ENCODE measurements at regions of chr9 and their contacts with region 1.

Region 1: DNA sequence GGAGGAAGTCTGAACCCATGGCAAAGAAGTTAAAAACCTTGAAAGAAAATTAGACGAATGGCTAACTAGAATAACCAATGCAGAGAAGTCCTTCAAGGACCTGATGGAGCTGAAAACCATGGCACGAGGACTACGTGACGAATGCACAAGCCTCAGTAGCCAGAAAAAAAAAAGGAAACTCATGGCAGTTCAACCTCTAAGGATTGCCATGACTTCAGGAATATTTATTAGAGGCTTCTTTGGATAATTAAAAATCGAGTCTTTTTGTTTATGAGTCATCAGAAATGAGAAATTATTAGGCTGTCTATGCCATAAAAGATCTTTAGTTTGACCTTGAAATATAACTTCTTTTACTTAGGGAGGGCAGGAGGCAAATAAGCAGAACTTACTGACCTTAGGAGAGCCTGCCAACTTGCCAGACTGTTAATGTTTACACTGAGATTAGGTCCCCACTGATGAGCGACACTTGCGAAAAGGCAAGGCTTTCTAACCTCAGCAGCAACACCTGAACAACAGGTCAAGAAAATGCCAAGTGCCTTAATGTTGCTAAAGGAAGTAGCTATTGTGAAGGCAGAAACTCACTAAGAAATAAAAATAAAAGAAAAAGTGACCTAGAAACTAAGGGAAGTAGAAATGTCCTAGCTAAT is 55.2 kb upstream of the TUSC1 start:
- DNase-seq: no peak
- ATAC-seq: no peak
- H3K4me3 ChIP-seq: no peak overlapping the region
- H3K4me3 Mint-ChIP-seq: no peak overlapping the region
- H3K27ac ChIP-seq: no peak overlapping the region
- H3K27ac Mint-ChIP-seq: no peak overlapping the region
- H3K4me1 ChIP-seq: no peaks in the 10 kb centered on the region
- H3K4me1 Mint-ChIP-seq: no peaks in the 10 kb centered on the region
- H3K27me3 ChIP-seq: no peaks in the 10 kb centered on the region
- H3K27me3 Mint-ChIP-seq: no peaks in the 10 kb centered on the region
- CTCF ChIP-seq: no peak

Region 2: DNA sequence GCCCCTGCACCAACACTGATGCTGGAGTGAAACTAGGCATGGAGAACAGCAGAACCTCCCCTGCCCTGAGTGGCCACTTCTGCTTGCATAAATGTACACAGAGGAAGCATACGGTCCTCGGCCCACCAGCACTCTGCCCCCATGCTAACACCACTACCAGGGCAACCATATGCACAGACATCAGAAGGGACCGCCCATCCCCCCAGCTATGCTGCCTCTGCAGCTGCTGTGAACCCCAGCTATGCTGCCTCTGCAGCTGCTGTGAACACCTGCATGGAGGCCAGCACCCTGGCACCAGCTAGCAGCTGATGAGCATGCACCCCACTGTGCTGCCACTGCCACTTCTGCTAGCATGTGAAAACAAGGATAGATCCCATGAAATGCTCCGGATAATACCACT is 305.6 kb before region 1 on chr9:
- CTCF ChIA-PET with region 1: no interaction called
- POLR2A ChIA-PET with region 1: no interaction called
- intact Hi-C with region 1: no loop called
- DNase-seq: no peak
- ATAC-seq: no peak
- H3K4me3 ChIP-seq: no peak overlapping the region
- H3K4me3 Mint-ChIP-seq: no peak overlapping the region
- H3K27ac ChIP-seq: no peak overlapping the region
- H3K27ac Mint-ChIP-seq: no peak overlapping the region
- H3K4me1 ChIP-seq: no peaks in the 10 kb centered on the region
- H3K4me1 Mint-ChIP-seq: no peaks in the 10 kb centered on the region
- H3K27me3 ChIP-seq: no peaks in the 10 kb centered on the region
- H3K27me3 Mint-ChIP-seq: no peaks in the 10 kb centered on the region
- CTCF ChIP-seq: no peak

Region 3: GRCh38 chr9:25709941-25710340 is 23.5 kb before region 1 on chr9:
- CTCF ChIA-PET with region 1: no interaction called
- POLR2A ChIA-PET with region 1: no interaction called
- intact Hi-C with region 1: loop called in 1 of 2 experiments (anchors 2 kb)
- DNase-seq: no peak
- ATAC-seq: no peak
- H3K4me3 ChIP-seq: no peak overlapping the region
- H3K4me3 Mint-ChIP-seq: no peak overlapping the region
- H3K27ac ChIP-seq: no peak overlapping the region
- H3K27ac Mint-ChIP-seq: no peak overlapping the region
- H3K4me1 ChIP-seq: no peaks in the 10 kb centered on the region
- H3K4me1 Mint-ChIP-seq: no peaks in the 10 kb centered on the region
- H3K27me3 ChIP-seq: no peaks in the 10 kb centered on the region
- H3K27me3 Mint-ChIP-seq: no peaks in the 10 kb centered on the region
- CTCF ChIP-seq: no peak

Measured in CD8-positive, alpha-beta T cell (primary cell).